WTC11 (cell line): ENCODE measurements at regions of chr6 and their contacts with region 1.

Region 1: GRCh38 chr6:129253727-129254126 is 370.8 kb downstream of the LAMA2 start:
- DNase-seq: no peak
- ATAC-seq: no peak
- H3K4me3 Mint-ChIP-seq: no peak overlapping the region
- H3K27ac Mint-ChIP-seq: no peak overlapping the region
- H3K4me1 Mint-ChIP-seq: peaks cover 4% of the 10 kb centered on the region
- H3K27me3 Mint-ChIP-seq: no peaks in the 10 kb centered on the region
- CTCF ChIP-seq: no peak

Region 2: DNA sequence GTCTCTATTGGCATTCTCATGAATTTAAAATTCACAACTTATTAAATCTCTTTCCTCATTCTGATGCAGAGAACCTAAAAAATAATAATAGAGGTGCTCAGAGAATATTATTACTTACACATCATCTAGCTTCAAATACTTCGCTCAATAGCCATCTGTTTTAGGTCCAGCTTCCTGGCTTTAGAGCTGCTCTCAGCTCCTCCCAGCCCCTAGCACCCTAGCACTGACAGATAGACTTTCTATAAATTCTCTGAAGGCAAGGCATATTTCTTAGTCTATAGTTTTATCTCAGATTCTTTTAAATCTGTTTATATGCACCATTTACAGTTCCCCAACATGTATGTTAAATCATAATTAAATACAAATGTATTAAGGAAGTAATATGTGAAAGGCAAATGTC is 1014.6 kb before region 1 on chr6:
- CTCF ChIA-PET with region 1: no interaction called
- POLR2A ChIA-PET with region 1: interaction called, 11 read pairs
- DNase-seq: no peak
- ATAC-seq: no peak
- H3K4me3 Mint-ChIP-seq: no peak overlapping the region
- H3K27ac Mint-ChIP-seq: no peak overlapping the region
- H3K4me1 Mint-ChIP-seq: peaks cover 14% of the 10 kb centered on the region
- H3K27me3 Mint-ChIP-seq: no peaks in the 10 kb centered on the region; the same call in 1 of the 2 replicates
- CTCF ChIP-seq: no peak

Region 3: DNA sequence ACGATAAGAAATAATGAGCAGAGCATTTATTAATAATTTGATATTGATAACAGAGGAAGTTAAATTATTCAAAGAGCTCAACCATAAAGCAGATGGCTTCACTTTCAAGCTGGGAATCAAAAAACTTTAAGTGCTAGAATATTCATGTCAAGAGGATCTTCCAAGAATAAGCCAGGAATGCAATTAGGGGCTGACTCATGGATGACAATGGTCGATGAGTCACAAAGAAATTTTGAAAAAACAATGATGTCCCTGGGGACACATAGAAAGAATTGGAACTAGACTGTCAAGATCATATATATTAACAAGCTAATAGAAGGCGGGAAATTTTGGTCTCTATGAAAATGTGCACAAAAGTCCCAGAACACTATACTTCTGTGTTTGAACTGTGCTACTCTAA is 66.7 kb before region 1 on chr6:
- CTCF ChIA-PET with region 1: no interaction called
- POLR2A ChIA-PET with region 1: no interaction called
- DNase-seq: no peak
- ATAC-seq: no peak
- H3K4me3 Mint-ChIP-seq: no peak overlapping the region
- H3K27ac Mint-ChIP-seq: no peak overlapping the region
- H3K4me1 Mint-ChIP-seq: peaks cover 12% of the 10 kb centered on the region
- H3K27me3 Mint-ChIP-seq: no peaks in the 10 kb centered on the region
- CTCF ChIP-seq: no peak